ENCODE measurements at regions of chr19 and their contacts with region 1.

Region 1: GRCh38 chr19:48695743-48696352 is at the start of gene FUT2:
- DNase-seq: no peak
- H3K4me3 ChIP-seq: peak within 1 kb of the TSS; percentile 10 to 60 (median 44)
- H3K27ac ChIP-seq: peak within 1 kb of the TSS; percentile 72 to 75
- H3K4me1 ChIP-seq: no peaks in the 10 kb centered on the region
- H3K27me3 ChIP-seq: no peaks in the 10 kb centered on the region
- CTCF ChIP-seq: no peak
- POLR2A ChIP-seq: no peak
- total RNA-seq, gene FUT2: 2.6 to 5.9 TPM in 2 of 3 donors, not detected in the other

Region 2: GRCh38 chr19:48623556-48624066 is 72.2 kb before region 1 on chr19:
- intact Hi-C with region 1: loop called (anchors 2 kb)
- DNase-seq: no peak
- H3K4me3 ChIP-seq: peak overlapping the region; percentile 34 to 65 (median 50)
- H3K27ac ChIP-seq: peak overlapping the region; percentile 73 to 82
- H3K4me1 ChIP-seq: peaks cover 0 to 6% of the 10 kb centered on the region in 2 donors
- H3K27me3 ChIP-seq: no peaks in the 10 kb centered on the region
- CTCF ChIP-seq: no peak
- POLR2A ChIP-seq: no peak